ENCODE measurements at regions of chr1 and their contacts with region 1.

Region 1: GRCh38 chr1:9494929-9495758 is 44.1 kb upstream of the SLC25A33 start:
- DNase-seq: peak; percentile 65
- ATAC-seq: peak; percentile 81
- H3K4me3 Mint-ChIP-seq: peak overlapping the region; percentile 80
- H3K27ac Mint-ChIP-seq: no peak overlapping the region
- H3K4me1 Mint-ChIP-seq: peaks cover 10% of the 10 kb centered on the region
- H3K27me3 Mint-ChIP-seq: peaks cover 15% of the 10 kb centered on the region
- CTCF ChIP-seq: peak; percentile 69

Region 2: DNA sequence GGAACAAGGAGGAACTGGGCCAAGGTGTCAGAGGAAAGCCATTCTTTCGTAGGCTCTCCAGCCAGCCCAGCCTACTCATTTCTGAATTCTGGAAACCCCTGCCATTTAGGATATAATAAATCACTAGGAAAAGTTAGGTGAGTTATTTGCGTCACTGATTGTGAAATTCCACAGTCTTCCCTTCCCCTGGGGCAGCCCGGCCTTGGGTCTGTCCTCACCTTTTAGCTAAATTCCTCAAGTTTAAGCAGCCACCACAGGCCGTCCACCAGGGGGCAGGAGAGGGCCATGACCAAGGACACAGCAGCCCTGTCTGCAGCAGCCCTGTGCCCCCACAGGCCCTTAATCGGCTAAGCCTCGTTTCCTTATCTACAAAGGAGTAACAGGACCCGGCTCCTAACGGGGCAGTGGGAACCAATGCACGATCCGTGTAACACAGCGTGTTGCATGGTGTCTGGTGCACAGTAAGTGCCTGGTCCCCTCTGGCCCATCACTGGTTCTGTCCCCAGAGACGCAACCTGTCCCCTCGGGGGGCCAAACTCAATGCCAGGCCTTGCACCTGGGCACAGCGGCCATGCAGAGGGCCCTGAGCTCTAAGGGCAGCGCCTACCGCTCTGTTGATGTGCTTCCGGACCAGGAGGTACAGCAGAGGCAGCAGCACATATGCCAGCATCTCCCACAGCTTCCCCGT is 384.3 kb before region 1 on chr1:
- CTCF ChIA-PET with region 1: interaction called, 13 read pairs
- POLR2A ChIA-PET with region 1: no interaction called
- intact Hi-C with region 1: loop called (anchors 1 kb)
- DNase-seq: peak; percentile 79
- ATAC-seq: peak; percentile 93
- H3K4me3 Mint-ChIP-seq: no peak overlapping the region
- H3K27ac Mint-ChIP-seq: no peak overlapping the region
- H3K4me1 Mint-ChIP-seq: peaks cover 4% of the 10 kb centered on the region
- H3K27me3 Mint-ChIP-seq: no peaks in the 10 kb centered on the region
- CTCF ChIP-seq: peak; percentile 76

Region 3: GRCh38 chr1:9269078-9269501 is 226.1 kb before region 1 on chr1:
- CTCF ChIA-PET with region 1: interaction called, 48 read pairs
- POLR2A ChIA-PET with region 1: interaction called, 3 read pairs
- intact Hi-C with region 1: loop called (anchors 1 kb)
- DNase-seq: no peak
- ATAC-seq: no peak
- H3K4me3 Mint-ChIP-seq: no peak overlapping the region
- H3K27ac Mint-ChIP-seq: no peak overlapping the region
- H3K4me1 Mint-ChIP-seq: no peaks in the 10 kb centered on the region
- H3K27me3 Mint-ChIP-seq: no peaks in the 10 kb centered on the region
- CTCF ChIP-seq: no peak

Region 4: DNA sequence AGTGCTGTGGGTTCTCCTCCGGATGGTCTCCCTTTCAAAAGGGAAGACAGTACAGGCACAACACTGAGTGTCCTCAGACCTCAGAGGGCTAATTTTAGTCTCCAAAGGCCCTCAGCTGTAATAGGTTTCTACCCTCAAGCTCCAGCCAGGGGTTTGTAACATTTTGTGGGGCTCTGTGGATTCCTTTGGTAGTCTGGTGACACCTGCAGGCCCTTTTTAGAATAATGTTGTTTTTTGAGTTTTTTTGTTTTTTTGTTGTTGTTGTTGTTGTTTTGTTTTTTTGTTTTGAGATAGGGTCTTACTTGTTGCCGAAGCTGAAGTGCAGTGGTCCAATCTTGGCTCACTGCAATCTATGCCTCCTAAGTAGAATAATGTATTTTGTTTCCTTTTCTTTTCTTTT is 78.6 kb after region 1 on chr1:
- CTCF ChIA-PET with region 1: interaction called, 26 read pairs
- POLR2A ChIA-PET with region 1: no interaction called
- intact Hi-C with region 1: loop called (anchors 1 kb)
- DNase-seq: no peak
- ATAC-seq: no peak
- H3K4me3 Mint-ChIP-seq: no peak overlapping the region
- H3K27ac Mint-ChIP-seq: no peak overlapping the region
- H3K4me1 Mint-ChIP-seq: peaks cover 5% of the 10 kb centered on the region
- H3K27me3 Mint-ChIP-seq: no peaks in the 10 kb centered on the region
- CTCF ChIP-seq: no peak

Region 5: GRCh38 chr1:9867408-9868243 is 372.5 kb after region 1 on chr1:
- CTCF ChIA-PET with region 1: interaction called, 7 read pairs
- POLR2A ChIA-PET with region 1: no interaction called
- intact Hi-C with region 1: loop called (anchors 1 kb)
- DNase-seq: peak; percentile 79
- ATAC-seq: peak; percentile 97
- H3K4me3 Mint-ChIP-seq: no peak overlapping the region
- H3K27ac Mint-ChIP-seq: no peak overlapping the region
- H3K4me1 Mint-ChIP-seq: no peaks in the 10 kb centered on the region
- H3K27me3 Mint-ChIP-seq: no peaks in the 10 kb centered on the region
- CTCF ChIP-seq: peak; percentile 24

Region 6: GRCh38 chr1:10308001-10308400 is 812.9 kb after region 1 on chr1:
- CTCF ChIA-PET with region 1: no interaction called
- POLR2A ChIA-PET with region 1: no interaction called
- intact Hi-C with region 1: no loop called
- DNase-seq: no peak
- ATAC-seq: no peak
- H3K4me3 Mint-ChIP-seq: no peak overlapping the region
- H3K27ac Mint-ChIP-seq: no peak overlapping the region
- H3K4me1 Mint-ChIP-seq: no peaks in the 10 kb centered on the region
- H3K27me3 Mint-ChIP-seq: no peaks in the 10 kb centered on the region
- CTCF ChIP-seq: no peak

Region 7: GRCh38 chr1:10338047-10338446 is 842.9 kb after region 1 on chr1:
- CTCF ChIA-PET with region 1: no interaction called
- POLR2A ChIA-PET with region 1: no interaction called
- intact Hi-C with region 1: no loop called
- DNase-seq: no peak
- ATAC-seq: peak; percentile 57
- H3K4me3 Mint-ChIP-seq: no peak overlapping the region
- H3K27ac Mint-ChIP-seq: no peak overlapping the region
- H3K4me1 Mint-ChIP-seq: no peaks in the 10 kb centered on the region
- H3K27me3 Mint-ChIP-seq: no peaks in the 10 kb centered on the region
- CTCF ChIP-seq: no peak

Region 8: DNA sequence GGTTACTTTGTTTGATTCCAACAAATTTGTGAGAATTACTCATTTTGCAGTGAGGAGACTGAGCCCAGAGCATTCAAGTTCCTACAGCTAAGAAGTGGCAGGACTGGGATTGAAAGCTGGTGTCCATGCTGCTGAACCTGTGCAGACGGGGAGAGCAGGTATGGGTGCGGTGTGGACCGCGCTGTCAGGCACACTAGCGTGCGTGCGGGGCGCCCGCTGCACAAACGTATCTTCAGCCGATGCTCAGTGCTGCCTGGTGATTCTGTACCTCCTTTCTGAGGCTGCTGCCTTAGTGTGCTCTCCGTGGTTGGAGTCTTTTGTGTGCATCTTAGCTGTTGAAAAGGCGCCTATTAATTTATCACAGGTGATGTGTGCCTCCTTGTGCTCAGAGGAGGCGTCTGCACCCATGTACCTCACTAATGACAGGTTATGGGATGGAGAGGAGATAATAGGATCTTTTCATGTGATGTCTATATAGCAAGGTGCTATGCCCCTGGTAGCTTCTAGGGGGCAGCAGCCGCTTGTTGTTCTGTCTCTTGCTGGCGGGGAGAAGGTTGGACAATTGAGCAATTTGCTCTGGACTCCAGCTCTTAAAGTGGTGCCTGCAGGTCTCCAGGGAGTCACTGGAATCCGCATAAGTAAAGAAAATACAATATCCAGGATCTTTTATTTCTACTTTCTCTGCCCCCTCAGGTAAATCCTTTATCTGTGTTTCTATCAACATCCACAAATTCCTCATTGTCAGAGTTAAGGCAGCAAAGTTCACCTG is 1012.2 kb after region 1 on chr1:
- CTCF ChIA-PET with region 1: no interaction called
- POLR2A ChIA-PET with region 1: no interaction called
- intact Hi-C with region 1: no loop called
- DNase-seq: no peak
- ATAC-seq: peak; percentile 67
- H3K4me3 Mint-ChIP-seq: peak overlapping the region; percentile 44
- H3K27ac Mint-ChIP-seq: no peak overlapping the region
- H3K4me1 Mint-ChIP-seq: peaks cover 38% of the 10 kb centered on the region
- H3K27me3 Mint-ChIP-seq: no peaks in the 10 kb centered on the region
- CTCF ChIP-seq: no peak